Activated CD4-positive, alpha-beta T cell treated with anti-CD3 and anti-CD28 coated beads for 36 hours (primary cell): ENCODE measurements at regions of chr10 and their contacts with region 1.

Region 1: DNA sequence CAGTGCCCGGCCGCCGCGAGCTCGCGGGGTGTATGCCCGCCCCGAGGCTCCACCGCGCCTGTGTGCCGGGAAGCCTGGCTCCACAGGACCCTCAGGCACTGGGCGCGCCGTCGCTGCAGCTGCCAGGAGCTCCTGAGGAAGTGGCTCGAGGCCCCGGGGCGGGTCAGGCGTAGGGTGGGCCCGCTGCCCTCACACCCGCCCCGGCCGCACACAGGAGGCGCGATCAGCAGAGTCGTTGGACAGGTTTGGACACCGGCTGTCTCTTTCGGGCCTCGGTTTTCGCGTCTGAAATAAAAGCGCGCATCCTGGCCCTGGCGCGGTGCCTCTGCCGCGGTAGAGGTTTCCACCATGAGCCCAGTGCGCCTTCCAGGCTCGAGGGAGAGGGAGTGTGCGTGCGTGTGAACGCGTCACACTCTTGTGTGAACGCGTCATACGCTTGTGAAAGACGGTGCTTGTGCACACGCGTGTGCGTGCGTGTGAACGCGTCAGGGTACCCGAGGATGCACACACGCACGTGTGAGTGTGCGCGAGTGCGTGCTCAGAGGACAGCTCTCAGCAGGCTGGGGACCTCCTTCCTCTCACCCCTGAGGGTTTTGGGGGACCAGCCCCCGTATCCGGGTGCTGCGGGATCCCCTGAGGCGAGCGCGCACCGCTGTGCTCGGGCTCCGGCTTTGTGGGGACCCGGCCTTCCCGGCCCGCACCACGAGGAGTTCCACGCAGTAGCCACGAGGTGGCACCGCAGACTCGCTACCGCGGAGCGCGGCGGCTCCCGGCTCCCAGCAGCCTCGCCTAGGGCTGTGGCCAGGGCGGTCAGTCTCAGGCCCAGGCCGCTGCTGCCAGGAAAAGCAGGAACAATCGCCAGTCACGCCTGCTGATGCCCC is 83.8 kb downstream of the BMS1 start:
- DNase-seq: peak; percentile 75
- ATAC-seq: peak; percentile 68
- H3K4me3 Mint-ChIP-seq: no peak overlapping the region
- H3K27ac Mint-ChIP-seq: no peak overlapping the region
- H3K4me1 Mint-ChIP-seq: peaks cover 4% of the 10 kb centered on the region
- H3K27me3 Mint-ChIP-seq: peaks cover 32% of the 10 kb centered on the region

Region 2: DNA sequence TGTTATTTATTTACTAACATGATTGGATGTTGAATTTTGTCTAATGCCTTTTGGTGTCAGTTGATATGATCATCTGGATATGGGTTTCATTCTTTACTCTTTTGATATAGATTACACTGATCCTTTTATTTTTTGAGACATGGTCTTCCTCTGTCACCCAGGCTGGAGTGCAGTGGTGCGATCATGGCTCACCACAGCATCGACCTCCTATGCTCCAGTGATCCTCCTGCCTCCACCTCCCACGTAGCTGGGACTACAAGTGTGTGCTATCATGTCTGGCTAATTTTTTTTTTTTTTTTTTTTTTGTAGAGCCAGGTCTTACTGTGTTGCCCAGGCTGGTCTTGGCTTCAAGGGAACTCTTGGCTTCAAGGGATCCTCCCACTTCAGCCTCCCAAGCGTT is 56.7 kb before region 1 on chr10:
- CTCF ChIA-PET with region 1: no interaction called
- POLR2A ChIA-PET with region 1: no interaction called
- intact Hi-C with region 1: no loop called
- DNase-seq: no peak
- ATAC-seq: no peak
- H3K4me3 Mint-ChIP-seq: no peak overlapping the region
- H3K27ac Mint-ChIP-seq: no peak overlapping the region
- H3K4me1 Mint-ChIP-seq: peaks cover 23% of the 10 kb centered on the region
- H3K27me3 Mint-ChIP-seq: no peaks in the 10 kb centered on the region

Region 3: DNA sequence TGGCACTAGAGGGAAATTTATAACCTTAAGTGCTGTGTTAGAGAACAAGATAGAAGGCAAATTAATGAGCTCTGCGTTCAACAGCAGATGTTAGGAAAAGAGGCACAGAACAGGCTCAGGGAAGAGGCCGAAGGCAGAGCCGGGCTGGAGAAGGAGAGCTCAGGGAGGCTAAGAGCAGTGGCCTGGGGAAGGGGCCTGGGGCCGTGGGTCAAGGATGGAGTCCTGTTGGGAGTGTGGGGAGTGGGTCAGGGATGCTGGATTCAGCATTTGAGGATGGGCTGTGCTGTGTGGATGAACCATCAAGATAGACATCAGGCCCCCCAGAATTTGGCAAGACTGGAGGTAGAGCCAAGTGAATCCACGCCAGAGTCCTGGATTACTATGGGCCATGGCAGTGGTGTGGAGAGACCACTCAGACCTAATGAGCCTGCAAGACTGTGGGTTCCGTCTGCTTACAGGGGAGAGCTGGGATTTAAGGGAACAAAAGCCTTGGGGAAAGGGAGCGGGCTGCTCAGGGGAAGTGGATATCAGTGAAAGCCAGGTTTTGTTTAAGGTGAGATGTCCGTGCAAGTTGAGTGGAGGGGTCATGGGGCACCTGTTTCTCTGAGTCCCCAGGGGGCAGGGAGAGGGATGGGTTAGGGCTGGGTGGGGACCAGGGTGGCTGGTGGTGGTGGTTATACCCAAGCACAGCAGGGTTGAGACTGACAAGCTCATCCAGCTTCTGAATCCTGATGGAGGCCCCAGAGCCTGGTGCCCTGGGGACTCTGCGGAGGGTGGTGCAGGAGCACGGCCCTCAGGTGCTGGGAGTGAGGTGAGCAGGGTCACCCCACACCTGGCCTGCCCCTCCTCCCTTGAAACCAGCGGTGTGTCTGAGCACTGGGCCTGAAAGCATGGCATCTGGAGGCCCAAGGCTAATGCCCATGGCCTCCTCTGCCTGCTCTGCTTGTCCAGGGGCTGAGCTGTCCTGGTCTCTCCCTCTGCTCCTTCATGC is 17.9 kb after region 1 on chr10:
- CTCF ChIA-PET with region 1: no interaction called
- POLR2A ChIA-PET with region 1: no interaction called
- intact Hi-C with region 1: no loop called
- DNase-seq: no peak
- ATAC-seq: no peak
- H3K4me3 Mint-ChIP-seq: no peak overlapping the region
- H3K27ac Mint-ChIP-seq: no peak overlapping the region
- H3K4me1 Mint-ChIP-seq: no peaks in the 10 kb centered on the region
- H3K27me3 Mint-ChIP-seq: no peaks in the 10 kb centered on the region

Region 4: DNA sequence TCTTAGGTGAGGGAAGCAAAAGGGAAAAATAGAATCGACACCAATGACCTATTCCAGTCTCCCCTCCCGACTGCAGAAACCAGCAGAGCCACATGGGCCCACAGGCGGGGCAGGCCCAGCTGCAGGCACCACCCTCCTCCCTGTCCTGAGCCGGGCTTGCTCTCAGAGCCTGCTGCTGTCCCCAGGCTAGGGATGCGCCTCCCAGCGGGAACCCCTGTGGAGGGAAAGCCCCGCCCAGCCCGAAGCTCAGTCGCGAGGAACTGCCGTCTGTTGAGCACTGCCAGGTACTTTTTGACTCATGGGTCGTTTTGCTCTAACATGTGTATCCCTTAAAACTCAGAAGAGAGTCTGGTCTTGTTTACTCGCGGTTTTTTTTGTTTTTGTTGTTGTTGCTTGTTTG is 86.0 kb after region 1 on chr10:
- CTCF ChIA-PET with region 1: no interaction called
- POLR2A ChIA-PET with region 1: no interaction called
- intact Hi-C with region 1: no loop called
- DNase-seq: no peak
- ATAC-seq: no peak
- H3K4me3 Mint-ChIP-seq: no peak overlapping the region
- H3K27ac Mint-ChIP-seq: no peak overlapping the region
- H3K4me1 Mint-ChIP-seq: no peaks in the 10 kb centered on the region
- H3K27me3 Mint-ChIP-seq: peaks cover 4% of the 10 kb centered on the region

Region 5: GRCh38 chr10:43255634-43256431 is 389.5 kb after region 1 on chr10:
- CTCF ChIA-PET with region 1: no interaction called
- POLR2A ChIA-PET with region 1: no interaction called
- intact Hi-C with region 1: loop called in 1 of 2 experiments (anchors 2 kb)
- DNase-seq: peak; percentile 67
- ATAC-seq: peak; percentile 96
- H3K4me3 Mint-ChIP-seq: no peak overlapping the region
- H3K27ac Mint-ChIP-seq: no peak overlapping the region
- H3K4me1 Mint-ChIP-seq: no peaks in the 10 kb centered on the region
- H3K27me3 Mint-ChIP-seq: no peaks in the 10 kb centered on the region